Mammary epithelial cell (primary cell): ENCODE measurements at regions of chr11 and their contacts with region 1.

Region 1: GRCh38 chr11:59560702-59561469 is 49.5 kb downstream of the OR4D9 start:
- DNase-seq: peak; percentile 88
- H3K4me3 ChIP-seq: peak overlapping the region; percentile 72 to 90 (median 86)
- H3K27ac ChIP-seq: peak overlapping the region; percentile 94
- H3K4me1 ChIP-seq: peaks cover 8% of the 10 kb centered on the region
- H3K27me3 ChIP-seq: no peaks in the 10 kb centered on the region
- CTCF ChIP-seq: no peak

Region 2: GRCh38 chr11:59053387-59053786 is 507.5 kb before region 1 on chr11:
- CTCF ChIA-PET with region 1: no interaction called
- dilution Hi-C with region 1: no loop called
- in situ Hi-C with region 1: no loop called
- intact Hi-C with region 1: no loop called
- DNase-seq: peak; percentile 25
- H3K4me3 ChIP-seq: no peak overlapping the region
- H3K27ac ChIP-seq: no peak overlapping the region
- H3K4me1 ChIP-seq: no peaks in the 10 kb centered on the region
- H3K27me3 ChIP-seq: peaks cover 4% of the 10 kb centered on the region
- CTCF ChIP-seq: peak; percentile 66 to 73

Region 3: DNA sequence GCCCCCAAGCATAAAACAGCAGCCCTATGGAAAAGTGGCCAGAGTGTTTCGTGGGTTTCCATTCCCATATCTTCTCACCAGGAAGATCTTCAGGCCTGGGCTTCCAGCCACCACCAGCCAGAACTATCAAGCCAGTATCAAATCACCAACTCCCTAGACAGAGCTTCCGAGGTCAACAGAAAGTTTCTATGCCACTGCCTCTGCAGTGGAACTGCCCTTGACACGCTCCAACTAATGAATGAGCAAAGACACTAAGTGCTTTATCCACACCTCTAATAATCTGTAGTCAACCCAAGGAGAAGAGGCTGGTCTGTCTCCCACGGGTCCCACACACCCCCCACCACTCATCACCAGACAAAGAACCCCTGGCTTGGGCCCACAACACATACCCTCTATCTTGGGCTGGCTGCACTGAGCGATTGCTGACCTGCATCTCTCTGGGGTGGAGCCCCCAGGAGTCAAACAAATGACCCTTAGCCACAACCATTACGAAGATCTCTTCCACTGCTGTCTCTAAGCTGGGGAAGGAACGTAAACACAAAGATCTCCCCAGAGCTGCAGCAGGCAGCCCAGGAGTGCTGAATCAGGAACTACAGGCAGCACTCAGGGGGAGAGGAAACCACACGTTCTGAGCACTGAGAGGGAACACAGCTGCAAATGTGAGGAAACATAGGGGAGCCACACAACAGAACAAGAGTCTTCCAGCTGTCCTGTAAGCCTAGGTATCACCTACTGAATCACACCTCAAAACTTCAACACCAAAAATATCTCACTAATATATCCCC is 192.5 kb before region 1 on chr11:
- CTCF ChIA-PET with region 1: no interaction called
- dilution Hi-C with region 1: no loop called
- in situ Hi-C with region 1: no loop called
- intact Hi-C with region 1: no loop called
- DNase-seq: no peak
- H3K4me3 ChIP-seq: no peak overlapping the region
- H3K27ac ChIP-seq: no peak overlapping the region
- H3K4me1 ChIP-seq: no peaks in the 10 kb centered on the region
- H3K27me3 ChIP-seq: no peaks in the 10 kb centered on the region
- CTCF ChIP-seq: no peak

Region 4: GRCh38 chr11:59475176-59475575 is 85.7 kb before region 1 on chr11:
- CTCF ChIA-PET with region 1: no interaction called
- dilution Hi-C with region 1: no loop called
- in situ Hi-C with region 1: no loop called
- intact Hi-C with region 1: no loop called
- DNase-seq: no peak
- H3K4me3 ChIP-seq: no peak overlapping the region
- H3K27ac ChIP-seq: no peak overlapping the region
- H3K4me1 ChIP-seq: no peaks in the 10 kb centered on the region
- H3K27me3 ChIP-seq: peaks cover 2% of the 10 kb centered on the region
- CTCF ChIP-seq: no peak

Region 5: GRCh38 chr11:59615637-59616395 is 54.9 kb after region 1 on chr11 and contains the start of gene OSBP:
- CTCF ChIA-PET with region 1: no interaction called
- dilution Hi-C with region 1: loop called (anchors 10 kb)
- in situ Hi-C with region 1: no loop called
- intact Hi-C with region 1: loop called (anchors 5 kb)
- DNase-seq: peak; percentile 100
- H3K4me3 ChIP-seq: peak within 1 kb of the TSS; percentile 68 to 85 (median 79)
- H3K27ac ChIP-seq: peak within 1 kb of the TSS; percentile 79
- H3K4me1 ChIP-seq: peaks cover 17% of the 10 kb centered on the region
- H3K27me3 ChIP-seq: no peaks in the 10 kb centered on the region
- CTCF ChIP-seq: no peak
- total RNA-seq, gene OSBP: 34.0 to 52.0 TPM